Testis (tissue), 5 donors: ENCODE measurements at regions of chr2 and their contacts with region 1.

Region 1: GRCh38 chr2:174673876-174674275 is 76.3 kb upstream of the WIPF1 start:
- DNase-seq: no peak
- H3K4me3 ChIP-seq: no peak overlapping the region
- H3K27ac ChIP-seq: no peak overlapping the region
- H3K4me1 ChIP-seq: peaks cover 11% of the 10 kb centered on the region
- H3K27me3 ChIP-seq: no peaks in the 10 kb centered on the region
- CTCF ChIP-seq: no peak
- POLR2A ChIP-seq: no peak

Region 2: GRCh38 chr2:174624895-174625430 is 48.9 kb before region 1 on chr2:
- intact Hi-C with region 1: loop called (anchors 5 kb)
- DNase-seq: no peak
- H3K4me3 ChIP-seq: no peak overlapping the region
- H3K27ac ChIP-seq: no peak overlapping the region
- H3K4me1 ChIP-seq: no peaks in the 10 kb centered on the region
- H3K27me3 ChIP-seq: no peaks in the 10 kb centered on the region
- CTCF ChIP-seq: no peak
- POLR2A ChIP-seq: no peak

Region 3: DNA sequence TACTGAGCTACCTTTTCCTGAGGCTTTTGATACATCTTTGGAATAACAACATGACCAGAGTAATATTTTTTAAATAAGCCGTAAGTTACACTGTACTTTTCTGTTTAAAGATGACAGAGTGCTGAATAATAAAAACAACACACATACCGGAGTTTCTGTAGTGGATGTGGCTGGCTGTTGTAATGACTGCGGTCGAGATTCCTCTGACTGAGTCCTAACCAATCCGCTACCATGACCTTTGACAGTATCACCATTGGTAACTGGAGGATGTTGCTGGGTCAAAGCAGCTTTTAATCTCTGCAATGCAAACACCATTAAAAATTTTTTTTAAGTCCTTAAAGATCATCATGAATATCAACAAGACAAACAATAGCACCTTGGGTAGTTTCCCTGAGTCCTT is 423.4 kb after region 1 on chr2:
- intact Hi-C with region 1: no loop called
- DNase-seq: no peak
- H3K4me3 ChIP-seq: no peak overlapping the region
- H3K27ac ChIP-seq: no peak overlapping the region
- H3K4me1 ChIP-seq: no peaks in the 10 kb centered on the region
- H3K27me3 ChIP-seq: no peaks in the 10 kb centered on the region
- CTCF ChIP-seq: no peak
- POLR2A ChIP-seq: no peak